HepG2 (cell line): ENCODE measurements at regions of chr9 and their contacts with region 1.

Region 1: GRCh38 chr9:22008736-22009562 is at the start of gene CDKN2B:
- DNase-seq: peak; percentile 85
- ATAC-seq: peak; percentile 96
- H3K4me3 ChIP-seq: peak within 1 kb of the TSS; percentile 72 to 89 (median 76)
- H3K27ac ChIP-seq: no peak within 1 kb of the TSS
- H3K4me1 ChIP-seq: peaks cover 12% of the 10 kb centered on the region
- H3K27me3 ChIP-seq: no peaks in the 10 kb centered on the region
- CTCF ChIP-seq: peak; percentile 90
- EP300 ChIP-seq: no peak
- POLR2A ChIP-seq: peak; percentile 67 to 71; a peak in 3 of 4 replicates
- RAD21 ChIP-seq: peak; percentile 71
- total RNA-seq, gene CDKN2B: 0.83 and 1.4 TPM in 2 replicates

Region 2: DNA sequence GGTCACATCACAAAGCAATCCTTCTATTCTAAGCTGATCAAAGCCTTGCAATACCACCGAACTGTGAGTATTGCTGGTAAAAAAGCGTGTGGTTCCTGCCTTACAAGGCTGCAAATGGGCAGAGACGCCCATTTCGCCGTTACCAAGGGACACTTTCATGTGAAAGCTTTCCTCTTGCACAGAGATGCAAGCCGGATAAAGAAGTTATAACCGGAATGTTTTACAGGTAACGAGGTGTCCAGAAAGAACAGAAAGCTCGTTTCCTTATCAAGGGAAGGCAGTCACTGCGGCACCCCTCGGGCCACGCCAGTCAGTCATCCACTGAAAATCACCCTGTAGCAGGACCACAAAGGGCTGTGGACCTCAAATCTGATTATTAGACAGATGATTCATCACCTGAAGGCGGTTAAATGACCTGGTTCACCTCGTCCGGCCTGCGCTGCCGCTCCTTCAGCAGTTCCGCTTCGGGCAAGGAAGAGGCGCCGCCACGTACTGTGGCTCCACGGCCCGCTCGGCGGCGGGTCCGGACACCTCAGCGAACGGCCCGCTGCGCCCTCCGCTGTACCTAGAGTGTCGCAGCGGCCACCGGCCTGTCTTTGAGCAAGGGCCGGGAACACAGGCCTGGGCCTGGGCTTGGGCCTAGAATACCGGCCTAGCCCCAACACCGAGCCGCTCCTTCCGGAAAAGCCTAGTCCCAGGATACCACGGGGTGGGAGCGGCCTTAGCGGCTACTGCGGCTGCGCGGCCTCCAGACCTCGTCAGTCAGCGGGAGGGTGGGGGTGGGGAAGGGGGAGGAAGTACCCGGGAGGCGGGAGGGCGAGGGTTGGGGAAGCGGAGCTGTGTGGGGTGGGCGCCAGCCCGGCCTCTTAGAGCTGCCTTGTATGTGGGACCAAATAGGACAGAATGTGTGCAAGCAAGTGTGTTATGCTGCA is 674.0 kb before region 1 on chr9 and contains the start of gene KLHL9:
- CTCF ChIA-PET with region 1: no interaction called
- POLR2A ChIA-PET with region 1: no interaction called
- in situ Hi-C with region 1: no loop called
- intact Hi-C with region 1: loop called (anchors 10 kb)
- DNase-seq: peak; percentile 82
- ATAC-seq: peak; percentile 98
- H3K4me3 ChIP-seq: peak within 1 kb of the TSS; percentile 78 to 88 (median 86)
- H3K27ac ChIP-seq: peak within 1 kb of the TSS; percentile 93
- H3K4me1 ChIP-seq: peaks cover 38% of the 10 kb centered on the region
- H3K27me3 ChIP-seq: no peaks in the 10 kb centered on the region; a peak in 1 of 5 replicates
- CTCF ChIP-seq: peak; percentile 18; the same call in 1 of the 2 replicates
- EP300 ChIP-seq: no peak
- POLR2A ChIP-seq: peak; percentile 64 to 67; a peak in 3 of 4 replicates
- RAD21 ChIP-seq: 0 out of 2 replicates have a peak, but pooled peaks have one; percentile 27
- total RNA-seq, gene KLHL9: 17.7 and 32.7 TPM in 2 replicates

Region 3: DNA sequence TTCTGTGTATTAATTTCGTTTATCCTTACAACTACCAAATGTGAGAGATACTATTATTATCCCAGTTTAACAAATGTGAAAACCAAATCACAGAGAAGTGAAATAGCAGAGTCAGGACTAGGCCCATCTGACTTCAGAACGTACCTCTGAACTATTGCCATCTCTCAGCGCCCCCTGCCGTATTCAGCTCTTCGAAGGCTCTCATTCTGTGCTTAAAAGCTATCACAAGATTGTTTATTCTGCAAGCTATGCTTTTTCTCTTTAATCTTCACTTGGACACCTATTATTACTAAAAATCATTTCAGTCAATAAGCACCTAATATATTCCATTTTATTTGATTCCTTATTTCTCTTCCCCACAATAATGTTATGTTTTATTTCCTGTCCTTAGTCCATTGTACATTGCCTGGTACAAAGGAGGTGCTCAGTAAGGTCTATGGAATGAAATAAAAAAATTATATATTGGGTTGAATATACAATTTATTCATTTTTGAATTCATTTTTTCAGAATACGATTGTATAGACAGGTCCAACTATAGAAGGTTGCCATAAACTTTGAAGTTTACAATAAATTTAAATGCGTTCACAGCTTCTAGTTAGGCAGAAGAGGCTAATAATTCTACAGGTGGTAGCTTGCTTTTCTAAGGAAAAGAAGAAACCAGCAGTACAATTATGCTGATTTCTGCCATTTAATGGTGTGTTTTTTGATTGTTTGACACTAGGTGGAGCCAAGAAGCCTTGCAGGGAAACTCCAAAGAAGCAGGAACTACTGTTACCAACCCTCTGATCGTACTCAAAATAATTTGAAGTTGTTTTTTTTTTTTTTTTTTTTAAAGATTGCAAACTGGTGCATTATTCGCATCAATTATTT is 235.4 kb after region 1 on chr9:
- CTCF ChIA-PET with region 1: no interaction called
- POLR2A ChIA-PET with region 1: no interaction called
- in situ Hi-C with region 1: no loop called
- intact Hi-C with region 1: loop called (anchors 2 kb)
- DNase-seq: peak; percentile 26
- ATAC-seq: peak; percentile 82
- H3K4me3 ChIP-seq: no peak overlapping the region
- H3K27ac ChIP-seq: no peak overlapping the region
- H3K4me1 ChIP-seq: no peaks in the 10 kb centered on the region
- H3K27me3 ChIP-seq: no peaks in the 10 kb centered on the region
- CTCF ChIP-seq: peak; percentile 57
- EP300 ChIP-seq: no peak
- POLR2A ChIP-seq: no peak
- RAD21 ChIP-seq: no peak